ENCODE measurements at regions of chr6 and their contacts with region 1.

Region 1: GRCh38 chr6:139117734-139118133 is 17.1 kb upstream of the HECA start:
- DNase-seq: no peak
- ATAC-seq: no peak
- H3K4me3 Mint-ChIP-seq: no peak overlapping the region
- H3K27ac Mint-ChIP-seq: no peak overlapping the region
- H3K4me1 Mint-ChIP-seq: peaks cover 48% of the 10 kb centered on the region
- H3K27me3 Mint-ChIP-seq: no peaks in the 10 kb centered on the region
- CTCF ChIP-seq: peak; percentile 42

Region 2: DNA sequence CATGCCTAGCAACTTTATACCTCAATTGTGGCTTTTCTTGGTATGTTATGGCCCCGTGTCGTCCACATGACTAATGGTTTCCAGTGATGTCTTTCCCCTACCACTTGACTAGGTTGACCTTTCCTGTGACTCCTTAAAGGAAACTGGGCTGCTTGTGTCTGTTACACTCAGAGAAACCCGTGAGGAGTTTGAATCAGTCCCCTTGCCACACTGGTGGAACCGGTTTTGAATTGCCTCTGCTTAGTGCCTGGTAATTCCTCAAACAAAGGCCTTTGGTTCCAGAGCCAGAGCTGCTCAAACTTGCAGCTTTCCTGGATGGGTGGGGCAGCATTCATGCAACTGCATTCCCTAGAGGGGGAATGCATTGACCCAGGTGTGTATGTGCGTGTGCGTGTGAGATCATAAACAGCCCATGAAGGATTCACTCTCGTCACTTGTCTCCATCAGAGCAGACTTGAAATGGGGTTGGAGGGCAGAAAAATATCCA is 299.9 kb before region 1 on chr6:
- CTCF ChIA-PET with region 1: interaction called, 4 read pairs
- POLR2A ChIA-PET with region 1: no interaction called
- intact Hi-C with region 1: loop called (anchors 10 kb)
- DNase-seq: peak; percentile 64
- ATAC-seq: peak; percentile 86
- H3K4me3 Mint-ChIP-seq: peak overlapping the region; percentile 20
- H3K27ac Mint-ChIP-seq: peak overlapping the region; percentile 83
- H3K4me1 Mint-ChIP-seq: peaks cover 29% of the 10 kb centered on the region
- H3K27me3 Mint-ChIP-seq: peaks cover 1% of the 10 kb centered on the region
- CTCF ChIP-seq: no peak

Region 3: GRCh38 chr6:138931660-138932059 is 186.1 kb before region 1 on chr6:
- CTCF ChIA-PET with region 1: no interaction called
- POLR2A ChIA-PET with region 1: no interaction called
- intact Hi-C with region 1: no loop called
- DNase-seq: no peak
- ATAC-seq: no peak
- H3K4me3 Mint-ChIP-seq: no peak overlapping the region
- H3K27ac Mint-ChIP-seq: no peak overlapping the region
- H3K4me1 Mint-ChIP-seq: peaks cover 10% of the 10 kb centered on the region
- H3K27me3 Mint-ChIP-seq: no peaks in the 10 kb centered on the region
- CTCF ChIP-seq: no peak

Region 4: DNA sequence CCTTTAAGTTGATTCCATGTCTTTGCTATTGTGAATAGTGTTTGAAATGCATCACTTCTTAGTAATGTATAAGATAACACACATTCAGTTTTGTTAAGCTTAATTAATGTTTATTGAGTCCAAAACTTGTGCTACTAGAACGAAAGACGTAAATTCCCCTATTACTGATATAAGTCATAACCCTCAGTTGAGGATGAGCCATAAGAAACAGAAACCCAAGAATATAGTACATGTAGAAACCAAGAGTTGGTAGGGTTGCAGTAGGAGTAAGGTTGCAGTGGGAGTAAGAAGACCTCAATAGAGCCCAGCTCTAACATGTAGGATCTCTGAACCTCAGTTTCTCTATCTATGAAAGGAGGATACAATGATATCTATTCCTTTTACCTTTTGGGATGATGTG is 237.4 kb after region 1 on chr6:
- CTCF ChIA-PET with region 1: no interaction called
- POLR2A ChIA-PET with region 1: no interaction called
- intact Hi-C with region 1: no loop called
- DNase-seq: no peak
- ATAC-seq: peak; percentile 53
- H3K4me3 Mint-ChIP-seq: no peak overlapping the region
- H3K27ac Mint-ChIP-seq: no peak overlapping the region
- H3K4me1 Mint-ChIP-seq: peaks cover 4% of the 10 kb centered on the region
- H3K27me3 Mint-ChIP-seq: no peaks in the 10 kb centered on the region
- CTCF ChIP-seq: no peak